Dorsolateral prefrontal cortex (tissue), 120 donors: ENCODE measurements at regions of chr4 and their contacts with region 1.

Region 1: DNA sequence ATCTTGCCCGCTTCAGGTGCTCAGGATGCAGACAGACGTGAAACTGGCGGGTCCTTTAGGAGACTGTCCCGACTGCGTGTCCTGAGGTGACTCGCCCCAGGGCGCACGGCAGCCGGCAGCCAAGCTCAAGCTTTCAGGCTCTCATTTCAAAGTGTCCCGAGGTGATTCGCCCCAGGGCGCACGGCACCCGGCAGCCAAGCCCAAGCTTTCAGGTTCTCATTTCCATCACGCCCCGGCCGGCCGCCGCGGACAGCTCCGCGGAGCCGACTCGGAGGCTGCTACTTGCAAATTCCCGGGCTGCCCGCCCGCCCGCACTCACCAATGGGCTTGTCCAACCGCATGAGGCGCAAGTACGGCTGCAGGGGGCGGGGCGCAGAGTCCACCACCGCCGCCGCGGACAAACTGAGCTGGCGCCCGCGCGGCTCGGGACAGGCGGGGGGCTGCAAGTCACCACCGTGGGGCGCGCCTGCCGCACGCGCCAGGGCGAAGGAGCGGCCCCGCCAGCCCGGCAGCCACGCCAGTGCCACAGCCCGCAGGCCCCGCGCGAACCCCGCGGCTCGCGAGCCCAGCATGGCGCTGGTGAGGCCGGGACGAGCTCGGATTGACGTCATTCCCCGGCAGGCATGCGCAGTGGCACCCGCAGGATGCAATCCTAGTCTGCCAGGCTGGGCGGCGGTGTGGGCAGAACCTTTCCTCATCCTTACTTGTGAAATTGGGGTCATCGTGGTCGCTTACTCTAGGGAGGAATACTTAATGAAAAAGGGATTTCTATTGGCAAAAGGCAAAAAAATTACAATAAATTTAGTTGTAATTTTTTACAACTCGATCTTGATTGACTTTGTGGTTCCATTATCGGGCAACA is at the start of gene COQ2:
- DNase-seq: peak; percentile 94 to 97 (median 95)
- H3K4me3 ChIP-seq: peak within 1 kb of the TSS; percentile 53 to 89 (median 77)
- H3K27ac ChIP-seq: peak within 1 kb of the TSS; percentile 61 to 99 (median 94)
- H3K27me3 ChIP-seq: no peaks in the 10 kb centered on the region
- CTCF ChIP-seq: peak in 55 of 56 donors; percentile 4 to 79 (median 48)
- total RNA-seq, gene COQ2: 3.6 to 10.1 (median 6.2) TPM

Region 2: DNA sequence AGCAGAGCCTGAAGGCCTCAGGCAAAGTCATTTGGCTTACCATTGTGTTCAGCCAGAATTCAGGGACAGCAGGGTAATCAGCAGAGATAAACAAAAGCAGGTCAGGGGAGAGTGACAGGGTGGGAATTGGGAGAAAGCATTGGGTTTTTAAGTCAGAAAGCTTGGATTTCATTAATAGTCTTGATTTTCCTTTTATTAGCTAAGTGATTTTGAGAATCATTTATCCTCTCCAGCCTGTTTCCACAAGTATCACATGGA is 1320.7 kb before region 1 on chr4:
- intact Hi-C with region 1: no loop called
- DNase-seq: no peak
- H3K4me3 ChIP-seq: no peak overlapping the region
- H3K27ac ChIP-seq: no peak overlapping the region
- H3K27me3 ChIP-seq: peaks cover 0 to 6% (median 0%) of the 10 kb centered on the region in 45 donors
- CTCF ChIP-seq: no peak

Region 3: GRCh38 chr4:82284858-82285805 is 999.3 kb before region 1 on chr4:
- intact Hi-C with region 1: loop called in 1 of 2 experiments (anchors 10 kb)
- DNase-seq: peak; percentile 89 to 100 (median 99)
- H3K4me3 ChIP-seq: peak overlapping the region; percentile 42 to 77 (median 65)
- H3K27ac ChIP-seq: peak overlapping the region in 51 of 59 donors; percentile 1 to 89 (median 73)
- H3K27me3 ChIP-seq: no peaks in the 10 kb centered on the region
- CTCF ChIP-seq: peak; percentile 66 to 95 (median 87)

Region 4: GRCh38 chr4:82450966-82451755 is 833.3 kb before region 1 on chr4:
- intact Hi-C with region 1: loop called in 1 of 2 experiments (anchors 10 kb)
- DNase-seq: no peak
- H3K4me3 ChIP-seq: no peak overlapping the region
- H3K27ac ChIP-seq: peak overlapping the region in 22 of 59 donors; percentile 0 to 70 (median 28)
- H3K27me3 ChIP-seq: no peaks in the 10 kb centered on the region
- CTCF ChIP-seq: no peak

Region 5: GRCh38 chr4:83012687-83013419 is 271.6 kb before region 1 on chr4:
- intact Hi-C with region 1: loop called in 1 of 2 experiments (anchors 5 kb)
- DNase-seq: peak; percentile 94 to 100 (median 96)
- H3K4me3 ChIP-seq: peak overlapping the region; percentile 45 to 98 (median 86)
- H3K27ac ChIP-seq: peak overlapping the region; percentile 63 to 98 (median 93)
- H3K27me3 ChIP-seq: no peaks in the 10 kb centered on the region
- CTCF ChIP-seq: peak in 55 of 56 donors; percentile 16 to 74 (median 53)

Region 6: DNA sequence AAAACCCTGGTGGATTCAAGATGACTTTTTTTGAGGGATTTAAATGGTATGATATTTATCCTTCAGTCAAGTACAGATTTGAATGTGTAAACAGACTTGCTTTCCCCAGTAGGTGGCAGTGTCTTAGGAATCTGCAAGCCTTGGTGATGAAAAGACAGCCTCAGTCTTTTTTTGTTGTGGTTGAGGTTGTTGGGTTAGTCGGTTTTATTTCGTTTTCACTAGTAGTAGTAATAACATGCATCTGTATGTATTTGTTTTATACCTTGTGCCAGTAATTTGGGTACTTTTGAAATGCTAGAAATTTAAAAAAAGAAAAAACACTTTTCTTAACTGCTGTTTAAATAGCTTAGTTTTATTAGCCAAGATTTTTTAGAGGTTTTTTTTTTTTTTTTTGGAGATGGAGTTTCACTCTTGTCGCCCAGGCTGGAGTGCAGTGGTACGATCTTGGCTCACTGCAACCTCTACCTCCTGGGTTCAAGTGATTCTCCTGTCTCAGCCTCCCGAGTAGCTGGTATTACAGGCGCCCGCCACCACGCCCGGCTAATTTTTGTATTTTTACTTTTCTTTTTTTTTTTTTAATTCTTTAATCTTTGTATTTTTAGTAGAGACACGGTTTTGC is 210.2 kb before region 1 on chr4:
- intact Hi-C with region 1: loop called (anchors 5 kb)
- DNase-seq: no peak
- H3K4me3 ChIP-seq: no peak overlapping the region
- H3K27ac ChIP-seq: peak overlapping the region in 1 of 59 donors; percentile 45
- H3K27me3 ChIP-seq: no peaks in the 10 kb centered on the region
- CTCF ChIP-seq: peak; percentile 58 to 84 (median 75)

Region 7: GRCh38 chr4:83334425-83335241 is 50.2 kb after region 1 on chr4 and contains the start of gene HPSE:
- intact Hi-C with region 1: no loop called
- DNase-seq: peak in 8 of 10 donors; percentile 14 to 61 (median 37)
- H3K4me3 ChIP-seq: peak within 1 kb of the TSS; percentile 34 to 77 (median 60)
- H3K27ac ChIP-seq: peak within 1 kb of the TSS in 1 of 59 donors; percentile 38
- H3K27me3 ChIP-seq: peaks cover 0 to 15% (median 0%) of the 10 kb centered on the region in 45 donors
- CTCF ChIP-seq: no peak
- total RNA-seq, gene HPSE: 0.35 to 5.7 (median 2.2) TPM

Region 8: GRCh38 chr4:83484500-83485461 is 200.4 kb after region 1 on chr4 and contains the start of gene ABRAXAS1:
- intact Hi-C with region 1: loop called in 1 of 2 experiments (anchors 10 kb)
- DNase-seq: peak; percentile 87 to 96 (median 93)
- H3K4me3 ChIP-seq: peak within 1 kb of the TSS; percentile 52 to 94 (median 84)
- H3K27ac ChIP-seq: peak within 1 kb of the TSS; percentile 54 to 95 (median 87)
- H3K27me3 ChIP-seq: no peaks in the 10 kb centered on the region
- CTCF ChIP-seq: peak in 24 of 56 donors; percentile 3 to 39 (median 23)
- total RNA-seq, gene ABRAXAS1: 1.8 to 9.7 (median 4.7) TPM